Activated T-helper 2 cell treated with anti-CD3 and anti-CD28 coated beads, Interferon-gamma antibody, Interleukin-2, Interleukin-4, amounts not matched to agents 10 μg/mL and 5 μg/mL and 100 μg/mL, durations not matched to agents 14 hours and 24 hours and 36 hours (primary cell): ENCODE measurements at regions of chr12 and their contacts with region 1.

Region 1: GRCh38 chr12:57621497-57622292 is 10.5 kb downstream of the ARHGEF25 start:
- DNase-seq: peak; percentile 37
- H3K4me3 Mint-ChIP-seq: peak overlapping the region; percentile 74
- H3K27ac Mint-ChIP-seq: no peak overlapping the region
- H3K4me1 Mint-ChIP-seq: peaks cover 15% of the 10 kb centered on the region
- H3K27me3 Mint-ChIP-seq: peaks cover 89% of the 10 kb centered on the region

Region 2: DNA sequence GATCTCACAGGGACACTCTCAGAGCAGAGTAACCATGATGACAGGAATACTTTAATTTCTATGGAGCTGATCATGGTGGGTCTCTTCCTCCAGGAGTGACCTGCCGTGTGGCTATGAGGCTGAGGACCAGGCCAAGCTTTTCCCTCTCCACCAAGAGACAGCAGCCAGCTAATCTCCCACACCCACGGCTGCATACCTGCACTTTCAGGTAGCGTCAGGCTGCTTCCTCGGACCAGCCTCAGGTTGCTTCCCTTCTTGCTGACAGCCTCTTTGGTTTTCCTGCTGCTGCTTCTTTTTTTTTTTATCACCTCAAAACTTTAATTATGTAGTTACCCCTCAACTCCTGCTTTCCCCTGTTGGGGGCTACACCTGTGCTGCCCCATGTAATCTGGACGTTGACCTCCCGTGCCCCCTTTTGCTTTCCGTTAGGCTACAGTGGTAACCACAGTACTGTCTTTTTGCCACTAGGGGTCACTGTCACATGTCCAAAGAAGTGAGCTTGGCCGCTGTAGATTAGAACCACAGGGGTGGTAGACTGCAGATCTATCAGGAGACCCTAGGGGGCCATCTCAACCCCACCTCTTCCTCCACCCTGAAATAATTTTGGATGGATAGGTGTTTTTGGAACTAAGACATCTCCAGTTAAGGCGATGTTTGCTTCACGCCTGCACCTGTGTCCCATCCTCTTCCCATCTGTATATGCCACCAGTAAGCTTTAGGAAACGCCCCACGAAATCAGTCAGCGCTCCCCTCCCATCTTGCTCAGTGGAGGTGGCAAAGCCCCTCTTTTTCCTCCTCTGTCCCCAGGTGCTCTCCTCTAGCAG is 38.5 kb before region 1 on chr12:
- intact Hi-C with region 1: loop called (anchors 1 kb)
- DNase-seq: peak; percentile 60
- H3K4me3 Mint-ChIP-seq: no peak overlapping the region
- H3K27ac Mint-ChIP-seq: no peak overlapping the region
- H3K4me1 Mint-ChIP-seq: peaks cover 2% of the 10 kb centered on the region
- H3K27me3 Mint-ChIP-seq: peaks cover 2% of the 10 kb centered on the region

Region 3: DNA sequence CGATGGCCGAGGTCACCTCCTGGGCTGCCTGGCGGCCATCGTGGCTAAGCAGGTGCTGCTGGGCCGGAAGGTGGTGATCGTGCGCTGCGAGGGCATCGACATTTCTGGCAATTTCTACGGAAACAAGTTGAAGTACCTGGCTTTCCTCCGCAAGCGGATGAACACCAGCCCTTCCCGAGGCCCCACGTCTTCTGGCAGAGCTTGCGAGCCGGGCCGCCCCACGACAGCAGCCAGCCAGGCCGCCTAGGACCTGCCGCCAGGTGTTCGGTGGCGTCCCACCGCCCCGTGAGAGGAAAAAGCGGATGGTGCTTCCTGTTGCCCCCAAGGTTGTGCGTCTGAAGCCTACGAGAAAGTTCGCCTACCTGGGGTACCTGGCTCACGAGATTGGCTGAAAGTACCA is 53.0 kb after region 1 on chr12:
- intact Hi-C with region 1: no loop called
- DNase-seq: no peak
- H3K4me3 Mint-ChIP-seq: no peak overlapping the region
- H3K27ac Mint-ChIP-seq: no peak overlapping the region
- H3K4me1 Mint-ChIP-seq: no peaks in the 10 kb centered on the region
- H3K27me3 Mint-ChIP-seq: peaks cover 11% of the 10 kb centered on the region